ENCODE measurements at regions of chr3 and their contacts with region 1.

Region 1: GRCh38 chr3:182683453-182683852 is 109.9 kb upstream of the ATP11B start:
- DNase-seq: peak; percentile 34
- ATAC-seq: peak; percentile 60
- H3K4me3 Mint-ChIP-seq: peak overlapping the region; percentile 89
- H3K27ac Mint-ChIP-seq: peak overlapping the region; percentile 15
- H3K4me1 Mint-ChIP-seq: peaks cover 7% of the 10 kb centered on the region
- H3K27me3 Mint-ChIP-seq: peaks cover 33% of the 10 kb centered on the region
- CTCF ChIP-seq: peak; percentile 87

Region 2: DNA sequence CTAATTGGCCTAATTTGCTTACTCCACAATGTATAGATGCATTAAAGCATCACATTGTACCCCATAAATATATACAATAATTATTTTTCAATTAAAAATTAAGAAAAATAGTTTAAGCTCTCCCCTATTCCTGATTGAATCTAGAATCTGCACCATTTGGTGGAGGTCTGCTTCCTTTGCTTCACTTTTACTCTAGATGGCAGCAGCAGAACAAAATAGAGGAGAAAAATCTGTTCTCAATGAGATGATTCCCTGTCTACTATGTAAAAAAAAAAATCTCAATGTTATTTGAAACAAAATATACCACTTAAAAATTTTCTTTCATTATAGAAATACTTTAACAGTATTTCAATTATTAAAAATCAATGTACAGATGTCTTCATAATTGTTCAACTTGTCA is 1880.6 kb before region 1 on chr3:
- CTCF ChIA-PET with region 1: no interaction called
- POLR2A ChIA-PET with region 1: no interaction called
- intact Hi-C with region 1: loop called (anchors 5 kb)
- DNase-seq: no peak
- ATAC-seq: no peak
- H3K4me3 Mint-ChIP-seq: no peak overlapping the region
- H3K27ac Mint-ChIP-seq: no peak overlapping the region
- H3K4me1 Mint-ChIP-seq: no peaks in the 10 kb centered on the region
- H3K27me3 Mint-ChIP-seq: peaks cover 4% of the 10 kb centered on the region
- CTCF ChIP-seq: no peak

Region 3: DNA sequence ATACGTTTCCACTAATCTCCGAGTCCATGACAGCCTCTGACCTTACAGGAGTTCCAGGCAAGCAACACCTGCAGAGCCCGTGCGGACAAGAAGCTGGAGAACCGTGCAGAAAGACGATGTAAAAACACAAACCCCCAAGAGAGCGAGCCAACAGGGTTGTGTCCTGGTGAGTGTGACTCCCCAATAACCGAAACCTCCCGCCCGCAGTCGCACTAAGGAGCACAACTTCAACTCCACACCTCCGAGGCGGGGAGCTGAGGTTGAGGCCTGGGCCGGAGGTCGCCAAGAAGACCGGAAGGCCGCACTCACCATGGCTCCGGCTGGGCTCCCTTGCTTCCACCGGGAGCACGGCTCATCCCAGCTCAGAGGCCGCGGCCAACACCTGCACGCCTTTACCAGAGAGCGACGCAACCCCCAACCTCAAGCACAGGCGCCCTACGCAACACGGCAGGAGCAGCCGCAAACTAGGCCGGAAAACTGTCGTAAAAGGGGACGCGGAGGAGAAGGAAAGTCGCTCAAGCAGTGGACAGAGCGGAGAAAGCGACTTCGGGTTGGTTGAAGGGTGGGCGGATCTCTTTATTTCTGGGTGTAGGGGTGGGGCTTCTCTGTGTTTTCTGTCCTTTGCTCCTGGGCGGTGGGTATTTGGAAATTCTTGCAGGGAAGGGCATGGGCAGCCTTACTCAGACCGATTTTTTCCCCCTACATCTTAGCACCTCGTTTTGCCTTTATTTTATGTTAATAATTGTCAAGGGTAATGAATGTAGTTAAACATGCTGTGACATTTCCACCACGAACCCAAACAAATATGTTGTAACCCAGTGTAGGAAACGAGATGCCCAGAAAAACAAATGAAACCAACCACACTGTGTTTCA is 1693.9 kb before region 1 on chr3 and contains the start of gene DNAJC19:
- CTCF ChIA-PET with region 1: no interaction called
- POLR2A ChIA-PET with region 1: no interaction called
- intact Hi-C with region 1: loop called (anchors 5 kb)
- DNase-seq: peak; percentile 77
- ATAC-seq: peak; percentile 97
- H3K4me3 Mint-ChIP-seq: peak within 1 kb of the TSS; percentile 98
- H3K27ac Mint-ChIP-seq: peak within 1 kb of the TSS; percentile 92
- H3K4me1 Mint-ChIP-seq: peaks cover 32% of the 10 kb centered on the region
- H3K27me3 Mint-ChIP-seq: peaks cover 7% of the 10 kb centered on the region
- CTCF ChIP-seq: no peak
- total RNA-seq, gene DNAJC19: 40.3 and 53.1 TPM in 2 replicates

Region 4: GRCh38 chr3:181709537-181710279 is 973.7 kb before region 1 on chr3:
- CTCF ChIA-PET with region 1: interaction called, 34 read pairs
- POLR2A ChIA-PET with region 1: no interaction called
- intact Hi-C with region 1: loop called (anchors 1 kb)
- DNase-seq: no peak
- ATAC-seq: no peak
- H3K4me3 Mint-ChIP-seq: peak overlapping the region; percentile 60
- H3K27ac Mint-ChIP-seq: peak overlapping the region; percentile 19
- H3K4me1 Mint-ChIP-seq: peaks cover 12% of the 10 kb centered on the region
- H3K27me3 Mint-ChIP-seq: peaks cover 48% of the 10 kb centered on the region
- CTCF ChIP-seq: peak; percentile 67

Region 5: GRCh38 chr3:182248351-182248880 is 435.0 kb before region 1 on chr3:
- CTCF ChIA-PET with region 1: no interaction called
- POLR2A ChIA-PET with region 1: no interaction called
- intact Hi-C with region 1: loop called (anchors 1 kb)
- DNase-seq: no peak
- ATAC-seq: no peak
- H3K4me3 Mint-ChIP-seq: no peak overlapping the region
- H3K27ac Mint-ChIP-seq: no peak overlapping the region
- H3K4me1 Mint-ChIP-seq: no peaks in the 10 kb centered on the region
- H3K27me3 Mint-ChIP-seq: peaks cover 2% of the 10 kb centered on the region
- CTCF ChIP-seq: no peak

Region 6: DNA sequence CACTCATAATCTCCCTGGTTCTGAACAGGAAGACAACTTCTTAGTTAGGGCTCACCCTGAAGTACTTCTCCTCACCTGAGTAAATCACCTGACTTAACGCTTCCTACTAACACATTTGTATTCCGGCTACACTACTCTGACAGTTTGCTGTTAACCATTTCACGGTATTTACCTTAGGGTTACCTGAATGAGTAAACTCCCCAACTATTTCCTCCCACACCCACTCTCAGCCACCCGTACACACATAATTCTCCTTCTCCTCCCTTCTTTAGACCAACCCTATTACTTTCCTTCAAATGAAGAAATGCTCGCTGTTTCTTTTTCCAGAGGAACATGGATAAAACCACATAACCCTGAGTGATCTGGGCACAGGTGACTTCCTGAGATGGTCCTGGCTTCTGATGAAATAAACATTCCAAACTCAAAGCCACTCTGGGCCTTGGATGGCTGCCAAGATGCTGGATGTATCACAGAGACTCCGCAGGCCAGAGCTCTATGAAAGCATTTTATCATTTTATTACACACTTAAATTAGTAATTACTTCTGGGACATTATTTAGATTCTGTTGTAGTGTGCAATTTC is 73.8 kb before region 1 on chr3:
- CTCF ChIA-PET with region 1: no interaction called
- POLR2A ChIA-PET with region 1: no interaction called
- intact Hi-C with region 1: no loop called
- DNase-seq: no peak
- ATAC-seq: no peak
- H3K4me3 Mint-ChIP-seq: no peak overlapping the region
- H3K27ac Mint-ChIP-seq: no peak overlapping the region
- H3K4me1 Mint-ChIP-seq: no peaks in the 10 kb centered on the region
- H3K27me3 Mint-ChIP-seq: peaks cover 5% of the 10 kb centered on the region
- CTCF ChIP-seq: no peak

Measured in activated B cell treated with CpG ODN at 0.5 μM for 24 hours (primary cell).